ENCODE measurements at regions of chr10 and their contacts with region 1.

Region 1: GRCh38 chr10:125160856-125161706 is 718 bp upstream of the CTBP2 start:
- DNase-seq: peak; percentile 91 to 92
- H3K4me3 ChIP-seq: peak overlapping the region; percentile 79 to 95
- H3K27ac ChIP-seq: peak overlapping the region; percentile 99 to 100
- H3K4me1 ChIP-seq: peaks cover 0 to 28% (median 23%) of the 10 kb centered on the region in 4 donors
- H3K27me3 ChIP-seq: no peaks in the 10 kb centered on the region
- CTCF ChIP-seq: peak; percentile 47 to 48

Region 2: GRCh38 chr10:124916585-124917427 is 244.3 kb before region 1 on chr10:
- intact Hi-C with region 1: loop called (anchors 10 kb)
- DNase-seq: peak; percentile 97 to 98
- H3K4me3 ChIP-seq: peak overlapping the region; percentile 82 to 95
- H3K27ac ChIP-seq: peak overlapping the region; percentile 96 to 97
- H3K4me1 ChIP-seq: peaks cover 0 to 51% (median 21%) of the 10 kb centered on the region in 4 donors
- H3K27me3 ChIP-seq: no peaks in the 10 kb centered on the region
- CTCF ChIP-seq: no peak

Region 3: GRCh38 chr10:125000366-125001312 is 160.4 kb before region 1 on chr10:
- intact Hi-C with region 1: loop called (anchors 10 kb)
- DNase-seq: peak; percentile 41 to 81
- H3K4me3 ChIP-seq: peak overlapping the region; percentile 45 to 49
- H3K27ac ChIP-seq: peak overlapping the region; percentile 95
- H3K4me1 ChIP-seq: peaks cover 0 to 78% (median 65%) of the 10 kb centered on the region in 4 donors
- H3K27me3 ChIP-seq: no peaks in the 10 kb centered on the region
- CTCF ChIP-seq: peak; percentile 16 to 22

Region 4: DNA sequence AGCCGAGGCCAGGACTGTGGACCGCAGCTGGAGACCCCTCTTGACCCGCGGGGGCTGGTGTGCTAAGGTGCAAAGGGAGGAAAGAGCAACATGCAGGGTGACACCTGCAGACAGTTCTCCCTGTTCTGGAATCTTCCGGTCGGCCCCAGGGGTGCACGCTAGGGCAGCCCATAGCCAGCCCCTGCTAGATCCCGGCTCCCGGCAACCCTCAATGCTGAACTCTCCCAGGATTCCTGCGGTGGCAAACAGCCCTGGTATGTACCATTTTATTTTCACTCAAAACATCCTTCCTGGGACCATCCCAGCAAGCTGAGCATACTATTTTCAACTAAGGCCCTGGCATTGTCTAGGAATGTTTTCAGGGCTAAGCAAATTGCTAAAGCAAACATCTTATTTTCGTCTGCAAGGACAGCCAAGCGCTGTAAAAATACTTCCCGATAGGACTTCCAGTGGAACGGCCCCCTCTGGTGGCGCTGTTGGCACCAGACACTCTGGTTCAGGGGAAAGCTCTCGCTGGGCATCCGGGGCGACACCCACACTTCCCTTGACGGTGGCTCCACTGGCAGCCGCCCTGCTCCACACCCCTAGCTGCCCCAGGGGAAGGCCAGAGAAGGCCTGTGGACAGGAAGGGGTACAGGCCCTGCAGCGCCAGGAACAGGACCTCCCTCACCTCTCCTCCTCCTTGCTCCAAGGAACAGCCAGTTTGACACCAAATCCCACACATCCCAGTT is 100.1 kb before region 1 on chr10:
- intact Hi-C with region 1: loop called (anchors 5 kb)
- DNase-seq: peak; percentile 91 to 96
- H3K4me3 ChIP-seq: peak overlapping the region; percentile 19 to 43
- H3K27ac ChIP-seq: peak overlapping the region; percentile 92 to 94
- H3K4me1 ChIP-seq: peaks cover 17 to 99% (median 96%) of the 10 kb centered on the region in 4 donors
- H3K27me3 ChIP-seq: no peaks in the 10 kb centered on the region
- CTCF ChIP-seq: peak; percentile 88 to 93

Region 5: DNA sequence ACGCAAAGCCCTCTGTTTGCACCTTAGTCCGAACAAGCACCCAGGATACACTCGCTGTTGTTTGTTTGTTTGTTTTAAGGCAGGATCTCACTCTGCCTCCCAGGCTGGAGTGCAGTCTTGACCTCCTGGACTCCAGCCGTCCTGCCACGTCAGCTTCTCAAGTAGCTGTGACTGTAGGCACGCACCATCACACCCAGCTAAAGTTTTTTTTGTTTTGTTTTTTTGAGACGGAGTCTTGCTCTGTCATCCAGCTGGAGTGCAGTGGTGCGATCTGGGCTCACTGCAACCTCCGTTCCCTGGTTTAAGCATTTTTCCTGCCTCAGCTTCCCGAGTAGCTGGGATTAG is 77.5 kb before region 1 on chr10:
- intact Hi-C with region 1: loop called (anchors 2 kb)
- DNase-seq: peak; percentile 51 to 89
- H3K4me3 ChIP-seq: no peak overlapping the region
- H3K27ac ChIP-seq: peak overlapping the region; percentile 86 to 92
- H3K4me1 ChIP-seq: peaks cover 0 to 55% (median 44%) of the 10 kb centered on the region in 4 donors
- H3K27me3 ChIP-seq: no peaks in the 10 kb centered on the region
- CTCF ChIP-seq: no peak

Region 6: GRCh38 chr10:125343118-125343925 is 182.2 kb after region 1 on chr10:
- intact Hi-C with region 1: no loop called
- DNase-seq: no peak
- H3K4me3 ChIP-seq: no peak overlapping the region
- H3K27ac ChIP-seq: no peak overlapping the region
- H3K4me1 ChIP-seq: no peaks in the 10 kb centered on the region
- H3K27me3 ChIP-seq: no peaks in the 10 kb centered on the region
- CTCF ChIP-seq: peak; percentile 45 to 54

Measured in tibial artery (tissue), 4 donors.